ENCODE measurements at regions of chr2 and their contacts with region 1.

Region 1: DNA sequence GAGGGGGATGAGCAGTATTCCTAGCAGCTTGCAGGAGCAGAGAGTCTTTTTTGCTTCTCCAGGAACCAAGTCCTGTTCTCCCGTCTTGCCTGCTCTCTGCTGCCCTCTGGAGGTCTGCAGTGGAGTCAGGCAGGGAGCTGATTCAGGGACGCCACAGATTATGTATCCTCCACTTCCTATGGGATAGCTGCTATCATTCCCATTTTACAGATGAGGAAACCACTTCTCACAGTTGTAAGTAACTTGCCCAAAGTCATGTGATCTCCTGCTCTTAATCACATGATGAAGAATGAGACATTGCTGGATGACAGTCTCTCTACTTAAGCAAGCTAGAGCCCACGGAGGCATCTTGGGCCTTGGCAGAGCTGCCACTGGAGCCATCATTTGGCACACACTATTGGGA is 8.3 kb downstream of the SLC4A5 start:
- DNase-seq: peak; percentile 74
- ATAC-seq: peak; percentile 83 to 86

Region 2: GRCh38 chr2:74162951-74163350 is 172.0 kb before region 1 on chr2:
- intact Hi-C with region 1: no loop called
- DNase-seq: no peak
- ATAC-seq: no peak

Region 3: DNA sequence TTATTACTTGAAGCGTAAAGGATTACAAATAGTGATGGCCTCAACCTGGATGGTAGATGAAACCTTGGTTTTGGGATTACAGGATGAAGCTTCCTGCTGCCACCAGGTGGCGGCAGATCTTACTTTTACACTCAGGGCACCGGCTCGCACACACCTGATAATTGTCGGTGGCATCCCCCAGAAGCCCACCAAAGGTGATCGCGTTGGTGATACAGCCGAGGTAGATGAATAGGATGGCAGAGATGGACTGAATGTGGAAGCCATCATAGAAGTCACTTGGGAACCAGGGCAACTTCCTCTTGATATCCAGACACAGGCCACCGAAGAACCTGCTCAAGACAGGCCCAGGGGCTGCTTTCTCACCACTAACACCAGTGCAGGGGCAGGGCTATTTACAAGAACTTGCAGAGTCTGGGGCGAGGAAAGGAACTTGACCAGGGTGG is 84.7 kb before region 1 on chr2:
- intact Hi-C with region 1: loop called in 1 of 2 experiments (anchors 2 kb)
- DNase-seq: peak; percentile 45
- ATAC-seq: peak; percentile 49 to 67

Region 4: GRCh38 chr2:74261204-74261864 is 73.6 kb before region 1 on chr2:
- intact Hi-C with region 1: loop called in 1 of 2 experiments (anchors 10 kb)
- DNase-seq: no peak
- ATAC-seq: peak; percentile 48 to 77

Region 5: GRCh38 chr2:74851191-74851566 is 516.2 kb after region 1 on chr2:
- intact Hi-C with region 1: no loop called
- DNase-seq: no peak
- ATAC-seq: no peak